ENCODE measurements at regions of chrX and their contacts with region 1.

Region 1: DNA sequence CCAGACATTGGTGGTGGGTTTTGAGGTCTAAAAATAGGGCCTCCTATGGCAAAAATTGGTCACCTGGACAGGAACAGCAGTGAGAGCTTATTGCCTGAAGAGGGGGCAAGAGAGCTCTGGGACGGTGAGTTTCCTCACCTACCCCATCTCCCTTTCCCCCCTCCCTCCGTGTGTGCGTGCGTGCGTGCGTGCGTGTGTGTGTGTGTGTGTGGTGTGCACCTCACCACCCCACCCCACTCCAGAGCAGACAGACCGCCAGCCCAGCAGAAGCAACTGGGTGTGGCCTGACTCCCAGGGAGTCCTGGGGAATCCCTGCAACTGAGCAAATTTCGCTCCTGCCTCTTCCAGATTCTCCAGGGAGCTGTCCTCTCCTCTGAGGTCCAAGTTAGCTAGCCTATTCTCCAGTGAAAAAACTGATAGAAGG is 44.7 kb downstream of the PRPS1 start:
- DNase-seq: peak; percentile 54
- ATAC-seq: peak; percentile 65
- H3K4me3 Mint-ChIP-seq: 0 out of 2 replicates have a peak overlapping the region, but pooled peaks have one; percentile 24
- H3K27ac Mint-ChIP-seq: no peak overlapping the region
- H3K4me1 Mint-ChIP-seq: peaks cover 33% of the 10 kb centered on the region
- H3K27me3 Mint-ChIP-seq: 0 out of 2 replicates have a peak, but pooled peaks cover under 1% of the 10 kb centered on the region
- CTCF ChIP-seq: peak; percentile 43; the same call in 1 of the 2 replicates

Region 2: DNA sequence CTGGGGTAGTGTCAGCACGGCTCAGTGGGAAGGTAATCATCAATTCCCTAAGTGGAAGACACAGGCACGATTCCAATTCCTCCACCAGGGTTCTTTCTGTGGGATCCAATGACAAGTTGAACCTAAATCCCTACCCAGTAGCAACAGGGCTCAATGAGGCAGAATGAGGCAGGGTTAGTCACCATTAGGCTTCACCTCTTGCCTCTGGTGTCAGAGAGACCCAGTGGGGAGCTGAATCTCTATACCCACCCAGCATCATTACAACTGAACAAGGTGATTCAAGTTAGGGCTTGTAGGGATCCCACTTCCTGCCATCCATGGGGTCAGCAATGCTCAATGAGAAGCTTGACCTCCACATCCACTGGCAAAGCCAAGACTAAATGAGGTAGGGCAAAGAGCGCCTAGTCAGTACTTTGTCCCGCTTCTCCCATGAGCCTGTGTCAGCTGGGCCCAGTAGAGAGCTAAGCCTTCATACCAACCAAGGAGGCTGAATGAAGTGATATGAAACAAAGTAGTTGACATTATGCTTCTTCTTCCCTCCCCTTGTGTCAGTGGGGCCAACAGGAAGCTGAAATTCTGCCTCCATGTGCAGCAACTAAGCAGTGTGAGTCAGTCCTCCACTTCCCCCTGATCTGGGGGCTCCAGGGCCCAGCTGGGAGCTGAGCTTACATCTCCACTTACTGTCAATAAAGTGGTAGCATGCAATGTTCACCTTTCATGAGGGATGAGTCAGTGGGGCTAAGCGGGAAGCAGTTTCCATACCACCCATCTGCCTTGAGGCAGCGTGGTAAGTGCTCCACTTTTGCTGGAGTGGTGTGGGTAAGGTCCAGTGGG is 518.0 kb before region 1 on chrX:
- CTCF ChIA-PET with region 1: no interaction called
- POLR2A ChIA-PET with region 1: no interaction called
- DNase-seq: no peak
- ATAC-seq: no peak
- H3K4me3 Mint-ChIP-seq: peak overlapping the region; percentile 76
- H3K27ac Mint-ChIP-seq: no peak overlapping the region
- H3K4me1 Mint-ChIP-seq: peaks cover 30% of the 10 kb centered on the region
- H3K27me3 Mint-ChIP-seq: no peaks in the 10 kb centered on the region
- CTCF ChIP-seq: no peak

Region 3: GRCh38 chrX:107442901-107443527 is 230.0 kb before region 1 on chrX:
- CTCF ChIA-PET with region 1: no interaction called
- POLR2A ChIA-PET with region 1: no interaction called
- DNase-seq: no peak
- ATAC-seq: peak; percentile 65
- H3K4me3 Mint-ChIP-seq: no peak overlapping the region
- H3K27ac Mint-ChIP-seq: no peak overlapping the region
- H3K4me1 Mint-ChIP-seq: peaks cover 27% of the 10 kb centered on the region
- H3K27me3 Mint-ChIP-seq: peaks cover 15% of the 10 kb centered on the region
- CTCF ChIP-seq: no peak

Region 4: GRCh38 chrX:107691024-107691448 is 18.1 kb after region 1 on chrX:
- CTCF ChIA-PET with region 1: no interaction called
- POLR2A ChIA-PET with region 1: no interaction called
- DNase-seq: no peak
- ATAC-seq: no peak
- H3K4me3 Mint-ChIP-seq: no peak overlapping the region
- H3K27ac Mint-ChIP-seq: no peak overlapping the region
- H3K4me1 Mint-ChIP-seq: no peaks in the 10 kb centered on the region
- H3K27me3 Mint-ChIP-seq: no peaks in the 10 kb centered on the region
- CTCF ChIP-seq: no peak

Region 5: DNA sequence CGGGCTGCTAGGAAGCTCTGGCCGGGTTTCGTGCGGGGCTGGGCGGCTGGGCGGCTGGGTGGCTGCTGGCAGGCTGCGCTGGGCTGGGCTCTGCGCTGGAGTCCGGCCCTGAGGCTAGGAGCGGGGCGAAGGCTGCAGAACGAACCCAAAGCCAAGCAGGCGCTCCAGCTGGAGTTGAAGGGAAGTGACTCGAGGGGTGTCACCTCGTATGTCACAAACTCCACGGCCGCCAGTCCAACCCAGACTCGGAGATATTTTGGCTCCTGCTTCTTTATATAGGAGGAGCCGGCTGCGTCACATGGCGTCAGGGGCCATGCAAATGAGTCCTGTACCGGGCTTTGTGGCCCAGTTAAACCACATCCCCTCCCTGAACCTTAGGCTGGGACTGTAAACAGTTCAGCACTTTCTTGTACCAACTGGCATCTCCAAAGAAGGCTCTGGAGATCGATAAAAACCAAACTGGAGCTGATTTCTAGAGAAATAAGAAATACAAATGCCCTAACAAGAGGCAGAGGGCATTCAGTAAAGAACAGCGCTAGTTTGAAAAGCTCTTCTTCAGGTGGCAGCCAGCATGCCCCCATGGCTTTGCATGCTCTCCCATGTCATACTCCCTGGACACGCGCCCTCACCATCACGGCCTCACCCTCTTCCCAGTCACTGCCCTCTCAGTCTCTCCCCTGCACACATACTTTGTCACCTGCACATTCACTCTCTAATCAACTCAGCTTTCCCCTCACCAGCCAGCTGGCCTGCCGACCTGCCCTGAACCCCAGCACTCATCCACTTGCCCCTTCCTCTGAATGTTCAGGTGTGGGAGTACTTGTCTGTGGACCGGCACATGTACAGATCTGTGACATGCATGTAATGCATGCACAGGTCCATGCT is 44.1 kb after region 1 on chrX:
- CTCF ChIA-PET with region 1: interaction called, 46 read pairs
- POLR2A ChIA-PET with region 1: interaction called, 11 read pairs
- DNase-seq: peak; percentile 42
- ATAC-seq: peak; percentile 43
- H3K4me3 Mint-ChIP-seq: peak overlapping the region; percentile 78
- H3K27ac Mint-ChIP-seq: peak overlapping the region; percentile 31
- H3K4me1 Mint-ChIP-seq: peaks cover 37% of the 10 kb centered on the region
- H3K27me3 Mint-ChIP-seq: no peaks in the 10 kb centered on the region
- CTCF ChIP-seq: no peak

Region 6: GRCh38 chrX:107731831-107732502 is 59.0 kb after region 1 on chrX:
- CTCF ChIA-PET with region 1: interaction called, 16 read pairs
- POLR2A ChIA-PET with region 1: interaction called, 3 read pairs
- DNase-seq: peak; percentile 52
- ATAC-seq: peak; percentile 78
- H3K4me3 Mint-ChIP-seq: no peak overlapping the region
- H3K27ac Mint-ChIP-seq: peak overlapping the region; percentile 74
- H3K4me1 Mint-ChIP-seq: peaks cover 52% of the 10 kb centered on the region
- H3K27me3 Mint-ChIP-seq: no peaks in the 10 kb centered on the region
- CTCF ChIP-seq: no peak

Region 7: GRCh38 chrX:107766470-107767150 is 93.6 kb after region 1 on chrX:
- CTCF ChIA-PET with region 1: interaction called, 10 read pairs
- POLR2A ChIA-PET with region 1: no interaction called
- DNase-seq: no peak
- ATAC-seq: peak; percentile 36; the same call in 1 of the 2 replicates
- H3K4me3 Mint-ChIP-seq: no peak overlapping the region
- H3K27ac Mint-ChIP-seq: no peak overlapping the region
- H3K4me1 Mint-ChIP-seq: peaks cover 15% of the 10 kb centered on the region
- H3K27me3 Mint-ChIP-seq: peaks cover under 1% of the 10 kb centered on the region; the same call in 1 of the 2 replicates
- CTCF ChIP-seq: no peak